HEK293 (cell line): ENCODE measurements at regions of chr19 and their contacts with region 1.

Region 1: DNA sequence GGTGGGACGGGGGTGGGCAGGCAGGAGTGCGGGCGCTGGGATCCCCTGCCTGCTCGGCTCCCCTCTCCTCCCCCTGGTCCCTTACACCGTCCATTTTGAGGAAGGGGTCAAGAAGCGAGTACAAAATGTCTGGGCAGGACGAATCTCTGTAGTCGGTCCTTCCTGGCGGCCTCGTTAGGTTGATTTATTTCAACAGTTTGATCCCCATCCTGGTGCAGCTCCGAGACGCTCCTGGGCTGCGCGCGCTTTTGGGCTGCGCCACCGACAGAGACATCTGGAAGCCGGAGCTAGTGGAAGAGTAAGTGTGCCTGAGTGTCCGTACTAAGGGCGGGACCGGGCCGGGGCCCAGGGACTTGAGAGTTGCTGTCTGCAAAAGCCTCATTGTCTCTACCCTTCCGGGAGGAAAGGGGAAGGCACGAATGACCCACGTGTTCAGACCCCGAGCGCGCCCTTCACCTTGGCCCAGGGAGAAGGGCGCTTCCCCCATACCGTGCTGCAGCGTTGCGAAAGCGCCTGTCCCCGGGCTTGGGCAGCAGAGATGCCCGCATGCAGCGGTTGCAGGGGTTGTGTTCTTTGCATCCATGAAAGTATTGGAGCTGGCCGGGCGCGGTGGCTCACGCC is 1.8 kb downstream of the ZNF114 start:
- H3K4me3 ChIP-seq: peak overlapping the region; percentile 41
- H3K27ac ChIP-seq: no peak overlapping the region
- H3K4me1 ChIP-seq: no peaks in the 10 kb centered on the region
- CTCF ChIP-seq: no peak

Region 2: GRCh38 chr19:48239580-48240141 is 32.0 kb before region 1 on chr19:
- CTCF ChIA-PET with region 1: no interaction called
- POLR2A ChIA-PET with region 1: no interaction called
- H3K4me3 ChIP-seq: no peak overlapping the region
- H3K27ac ChIP-seq: no peak overlapping the region
- H3K4me1 ChIP-seq: no peaks in the 10 kb centered on the region
- CTCF ChIP-seq: no peak

Region 3: DNA sequence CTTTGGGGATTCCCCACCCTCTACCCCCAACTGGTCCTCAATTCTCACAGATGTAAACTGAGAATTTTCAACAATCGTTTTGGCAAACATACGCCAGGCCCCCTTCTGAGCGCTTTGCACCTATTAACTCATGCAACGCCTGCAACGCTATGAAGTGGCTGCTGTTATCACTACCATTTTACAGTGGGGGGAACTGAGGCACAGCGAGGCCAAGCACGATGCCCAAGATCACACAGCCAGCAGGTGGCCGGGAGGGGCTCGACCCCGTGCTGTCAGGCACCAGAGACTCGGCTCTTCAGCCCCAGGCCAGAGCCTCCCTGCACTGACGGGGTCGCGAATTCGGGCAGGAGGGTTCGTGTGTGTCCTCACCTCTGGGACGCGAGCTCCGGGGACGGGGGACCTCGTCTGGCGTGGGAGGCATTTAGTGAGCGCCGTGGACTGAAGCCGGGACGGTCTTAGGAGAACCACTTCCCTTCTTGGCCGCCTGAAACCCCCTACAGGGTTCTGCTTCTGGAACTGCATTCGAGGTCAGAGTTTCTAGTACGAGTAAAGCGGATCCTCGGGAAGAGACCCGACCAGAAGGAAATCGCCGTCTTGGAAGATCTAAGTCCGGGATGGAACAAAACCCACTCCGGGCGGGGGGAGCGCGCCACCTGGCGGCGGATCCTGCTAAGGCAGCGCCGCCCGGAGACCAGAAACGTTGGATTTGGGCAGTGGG is 19.3 kb after region 1 on chr19:
- CTCF ChIA-PET with region 1: interaction called, 82 read pairs
- POLR2A ChIA-PET with region 1: interaction called, 6 read pairs
- H3K4me3 ChIP-seq: peak overlapping the region; percentile 38
- H3K27ac ChIP-seq: no peak overlapping the region
- H3K4me1 ChIP-seq: no peaks in the 10 kb centered on the region
- CTCF ChIP-seq: peak; percentile 89